ENCODE measurements at regions of chr17 and their contacts with region 1.

Region 1: GRCh38 chr17:45247429-45248131 is 14.3 kb downstream of the SPATA32 start:
- DNase-seq: peak; percentile 92 to 99 (median 93)
- H3K4me3 ChIP-seq: peak overlapping the region; percentile 42 to 81
- H3K4me3 Mint-ChIP-seq: peak overlapping the region; percentile 85 to 91 (median 89)
- H3K27ac ChIP-seq: peak overlapping the region; percentile 91
- H3K27ac Mint-ChIP-seq: peak overlapping the region; percentile 94 to 99 (median 98)
- H3K4me1 ChIP-seq: peaks cover 74% of the 10 kb centered on the region
- H3K4me1 Mint-ChIP-seq: peaks cover 24 to 80% (median 51%) of the 10 kb centered on the region in 4 donors
- H3K27me3 ChIP-seq: no peaks in the 10 kb centered on the region
- H3K27me3 Mint-ChIP-seq: no peaks in the 10 kb centered on the region

Region 2: GRCh38 chr17:45060797-45061605 is 186.6 kb before region 1 on chr17 and contains the start of gene NMT1:
- CTCF ChIA-PET with region 1: no interaction called
- POLR2A ChIA-PET with region 1: interaction called, 5 read pairs
- intact Hi-C with region 1: loop called (anchors 5 kb)
- DNase-seq: peak; percentile 98 to 99 (median 98)
- H3K4me3 ChIP-seq: peak within 1 kb of the TSS; percentile 80 to 100
- H3K4me3 Mint-ChIP-seq: peak within 1 kb of the TSS; percentile 96 to 100 (median 100)
- H3K27ac ChIP-seq: peak within 1 kb of the TSS; percentile 88
- H3K27ac Mint-ChIP-seq: peak within 1 kb of the TSS; percentile 91 to 100 (median 98)
- H3K4me1 ChIP-seq: peaks cover 42% of the 10 kb centered on the region
- H3K4me1 Mint-ChIP-seq: peaks cover 20 to 64% (median 46%) of the 10 kb centered on the region in 4 donors
- H3K27me3 ChIP-seq: no peaks in the 10 kb centered on the region
- H3K27me3 Mint-ChIP-seq: no peaks in the 10 kb centered on the region
- total RNA-seq, gene NMT1: 125 to 126 TPM

Region 3: GRCh38 chr17:45172454-45173286 is 74.9 kb before region 1 on chr17:
- CTCF ChIA-PET with region 1: no interaction called
- POLR2A ChIA-PET with region 1: interaction called, 12 read pairs
- intact Hi-C with region 1: no loop called
- DNase-seq: peak; percentile 21 to 44 (median 35)
- H3K4me3 ChIP-seq: peak overlapping the region; percentile 11 to 46
- H3K4me3 Mint-ChIP-seq: peak overlapping the region; percentile 69 to 87 (median 79)
- H3K27ac ChIP-seq: peak overlapping the region; percentile 17
- H3K27ac Mint-ChIP-seq: peak overlapping the region; percentile 43 to 91 (median 87)
- H3K4me1 ChIP-seq: peaks cover 16% of the 10 kb centered on the region
- H3K4me1 Mint-ChIP-seq: peaks cover 5 to 17% (median 12%) of the 10 kb centered on the region in 4 donors
- H3K27me3 ChIP-seq: no peaks in the 10 kb centered on the region
- H3K27me3 Mint-ChIP-seq: no peaks in the 10 kb centered on the region

Region 4: GRCh38 chr17:45197555-45198334 is 49.8 kb before region 1 on chr17:
- CTCF ChIA-PET with region 1: no interaction called
- POLR2A ChIA-PET with region 1: no interaction called
- intact Hi-C with region 1: no loop called
- DNase-seq: peak; percentile 74 to 84 (median 76)
- H3K4me3 ChIP-seq: no peak overlapping the region
- H3K4me3 Mint-ChIP-seq: no peak overlapping the region
- H3K27ac ChIP-seq: no peak overlapping the region
- H3K27ac Mint-ChIP-seq: no peak overlapping the region
- H3K4me1 ChIP-seq: no peaks in the 10 kb centered on the region
- H3K4me1 Mint-ChIP-seq: peaks cover 0 to 4% (median 2%) of the 10 kb centered on the region in 4 donors
- H3K27me3 ChIP-seq: no peaks in the 10 kb centered on the region
- H3K27me3 Mint-ChIP-seq: no peaks in the 10 kb centered on the region

Region 5: GRCh38 chr17:45235416-45236281 is 11.9 kb before region 1 on chr17:
- CTCF ChIA-PET with region 1: interaction called, 44 read pairs
- POLR2A ChIA-PET with region 1: interaction called, 1,143 read pairs
- intact Hi-C with region 1: loop called (anchors 1 kb)
- DNase-seq: peak; percentile 72 to 78 (median 73)
- H3K4me3 ChIP-seq: no peak overlapping the region
- H3K4me3 Mint-ChIP-seq: peak overlapping the region in 3 of 8 donors; percentile 17 to 63 (median 29)
- H3K27ac ChIP-seq: peak overlapping the region; percentile 57
- H3K27ac Mint-ChIP-seq: peak overlapping the region; percentile 88 to 99 (median 93)
- H3K4me1 ChIP-seq: peaks cover 54% of the 10 kb centered on the region
- H3K4me1 Mint-ChIP-seq: peaks cover 38 to 70% (median 53%) of the 10 kb centered on the region in 4 donors
- H3K27me3 ChIP-seq: no peaks in the 10 kb centered on the region
- H3K27me3 Mint-ChIP-seq: no peaks in the 10 kb centered on the region

Region 6: GRCh38 chr17:45277216-45277849 is 29.8 kb after region 1 on chr17:
- CTCF ChIA-PET with region 1: interaction called, 29 read pairs
- POLR2A ChIA-PET with region 1: interaction called, 8 read pairs
- intact Hi-C with region 1: no loop called
- DNase-seq: peak; percentile 83 to 91 (median 85)
- H3K4me3 ChIP-seq: no peak overlapping the region
- H3K4me3 Mint-ChIP-seq: no peak overlapping the region
- H3K27ac ChIP-seq: no peak overlapping the region
- H3K27ac Mint-ChIP-seq: peak overlapping the region in 6 of 7 donors; percentile 15 to 86 (median 48)
- H3K4me1 ChIP-seq: peaks cover 6% of the 10 kb centered on the region
- H3K4me1 Mint-ChIP-seq: peaks cover 8 to 11% (median 10%) of the 10 kb centered on the region in 4 donors
- H3K27me3 ChIP-seq: no peaks in the 10 kb centered on the region
- H3K27me3 Mint-ChIP-seq: no peaks in the 10 kb centered on the region

Region 7: GRCh38 chr17:45385331-45385997 is 137.9 kb after region 1 on chr17:
- CTCF ChIA-PET with region 1: interaction called, 6 read pairs
- POLR2A ChIA-PET with region 1: interaction called, 17 read pairs
- intact Hi-C with region 1: loop called (anchors 1 kb)
- DNase-seq: peak; percentile 80 to 86 (median 82)
- H3K4me3 ChIP-seq: no peak overlapping the region
- H3K4me3 Mint-ChIP-seq: peak overlapping the region in 1 of 8 donors; percentile 11
- H3K27ac ChIP-seq: no peak overlapping the region
- H3K27ac Mint-ChIP-seq: peak overlapping the region in 3 of 7 donors; percentile 32 to 68 (median 50)
- H3K4me1 ChIP-seq: peaks cover 4% of the 10 kb centered on the region
- H3K4me1 Mint-ChIP-seq: peaks cover 0 to 6% (median 4%) of the 10 kb centered on the region in 4 donors
- H3K27me3 ChIP-seq: no peaks in the 10 kb centered on the region
- H3K27me3 Mint-ChIP-seq: peaks cover 5 to 9% of the 10 kb centered on the region in 2 donors